ENCODE measurements at regions of chr2 and their contacts with region 1.

Region 1: DNA sequence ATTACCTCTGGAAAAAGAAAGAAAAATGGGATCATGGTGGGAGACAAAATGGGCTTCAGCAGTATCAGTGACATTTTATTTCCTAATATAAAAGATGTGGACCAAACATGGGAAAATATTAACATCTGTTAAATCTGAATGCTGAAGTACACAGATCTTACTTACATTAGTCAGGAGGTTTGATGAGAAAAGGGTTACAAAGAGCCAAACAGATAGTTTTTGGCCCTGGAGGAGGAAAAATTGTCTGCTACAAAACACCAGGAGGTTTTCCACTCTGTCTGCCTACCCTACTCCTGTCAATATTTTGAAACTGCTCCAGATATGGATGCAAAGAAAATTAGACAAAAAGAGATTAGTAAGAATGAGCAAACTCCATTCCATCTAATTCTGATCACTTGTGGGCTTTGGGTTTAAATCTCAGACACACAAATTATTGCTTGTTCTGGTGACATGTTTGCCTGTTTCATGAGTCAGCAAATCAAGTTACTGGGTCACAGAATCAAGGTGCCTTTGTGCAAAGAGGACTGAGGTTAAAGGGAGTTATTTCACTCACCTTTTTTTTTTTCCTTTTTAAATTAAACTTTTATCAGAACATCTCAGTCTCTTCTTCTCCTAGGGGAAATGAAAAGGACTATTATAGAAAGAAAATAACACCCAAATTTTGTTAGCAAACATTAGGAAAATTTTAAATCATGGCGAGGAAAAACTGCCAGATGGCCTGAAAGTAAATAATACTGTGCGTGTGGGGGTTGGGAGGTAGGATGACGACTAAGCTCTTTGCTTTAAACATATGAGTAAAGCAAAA is 87.0 kb upstream of the SPATS2L start:
- DNase-seq: no peak
- H3K4me3 ChIP-seq: no peak overlapping the region
- CTCF ChIP-seq: no peak

Region 2: GRCh38 chr2:200279857-200280256 is 60.3 kb after region 1 on chr2:
- in situ Hi-C with region 1: loop called (anchors 5 kb)
- DNase-seq: no peak
- H3K4me3 ChIP-seq: no peak overlapping the region
- CTCF ChIP-seq: no peak